Gastrocnemius medialis (tissue), 4 donors: ENCODE measurements at regions of chr9 and their contacts with region 1.

Region 1: GRCh38 chr9:135126535-135127187 is 39.2 kb downstream of the OLFM1 start:
- DNase-seq: peak; percentile 93 to 97
- ATAC-seq: peak; percentile 95 to 99
- H3K4me3 ChIP-seq: no peak overlapping the region
- H3K27ac ChIP-seq: peak overlapping the region; percentile 77 to 88 (median 82)
- H3K4me1 ChIP-seq: peaks cover 21 to 22% of the 10 kb centered on the region in 2 donors
- H3K27me3 ChIP-seq: no peaks in the 10 kb centered on the region
- CTCF ChIP-seq: peak in 1 of 5 experiments; percentile 13
- POLR2A ChIP-seq: peak in 1 of 2 donors; percentile 39

Region 2: DNA sequence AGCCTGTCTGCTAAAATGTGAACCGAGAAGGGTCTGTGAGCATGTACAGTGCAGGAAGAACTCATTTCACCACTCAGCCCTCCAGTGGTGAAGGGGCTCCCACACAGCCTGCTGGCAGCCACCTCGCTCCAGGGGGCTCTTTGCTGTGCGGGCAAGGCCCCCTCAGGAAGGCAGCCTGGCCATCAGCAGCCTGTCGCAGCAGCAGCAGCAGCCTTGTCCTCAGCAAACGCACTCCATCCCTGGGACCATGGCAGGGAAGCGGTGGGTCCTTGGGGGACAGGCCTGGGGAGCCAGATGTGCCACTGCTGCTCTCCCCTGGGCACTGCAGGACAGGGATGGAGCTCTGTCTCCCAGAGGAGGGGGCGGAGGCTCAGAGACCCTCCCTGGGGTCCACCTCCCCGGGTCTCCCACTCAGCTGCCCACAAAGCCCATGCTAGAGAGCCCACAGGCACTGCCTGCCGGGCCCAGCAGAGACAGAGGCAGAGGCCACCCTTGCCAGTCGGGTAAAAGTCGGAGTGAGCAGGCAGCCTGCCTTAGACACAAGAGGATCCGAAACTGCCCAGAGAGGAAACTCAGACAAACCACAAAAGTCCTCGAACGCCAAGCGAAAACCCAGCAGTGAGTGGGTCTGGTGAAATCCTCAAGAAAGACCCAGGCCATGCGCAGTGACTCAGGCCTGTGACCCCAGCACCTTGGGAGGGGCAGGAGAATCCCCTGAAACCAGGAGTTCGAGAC is 1066.8 kb before region 1 on chr9:
- in situ Hi-C with region 1: no loop called
- intact Hi-C with region 1: loop called (anchors 5 kb)
- DNase-seq: peak in 1 of 2 donors; percentile 28
- ATAC-seq: no peak
- H3K4me3 ChIP-seq: no peak overlapping the region
- H3K27ac ChIP-seq: no peak overlapping the region
- H3K4me1 ChIP-seq: peaks cover 93 to 100% of the 10 kb centered on the region in 2 donors
- H3K27me3 ChIP-seq: no peaks in the 10 kb centered on the region
- CTCF ChIP-seq: no peak
- POLR2A ChIP-seq: no peak

Region 3: GRCh38 chr9:135103001-135103446 is 23.6 kb before region 1 on chr9:
- in situ Hi-C with region 1: no loop called
- intact Hi-C with region 1: loop called (anchors 1 kb)
- DNase-seq: peak; percentile 81 to 93
- ATAC-seq: peak; percentile 95 to 98
- H3K4me3 ChIP-seq: no peak overlapping the region
- H3K27ac ChIP-seq: peak overlapping the region; percentile 69 to 85 (median 78)
- H3K4me1 ChIP-seq: peaks cover 24 to 47% of the 10 kb centered on the region in 2 donors
- H3K27me3 ChIP-seq: no peaks in the 10 kb centered on the region
- CTCF ChIP-seq: no peak
- POLR2A ChIP-seq: peak in 1 of 2 donors; percentile 26

Region 4: GRCh38 chr9:135355521-135356011 is 228.9 kb after region 1 on chr9:
- in situ Hi-C with region 1: no loop called
- intact Hi-C with region 1: no loop called
- DNase-seq: no peak
- ATAC-seq: no peak
- H3K4me3 ChIP-seq: no peak overlapping the region
- H3K27ac ChIP-seq: no peak overlapping the region
- H3K4me1 ChIP-seq: no peaks in the 10 kb centered on the region
- H3K27me3 ChIP-seq: peaks cover 9 to 24% (median 12%) of the 10 kb centered on the region in 3 donors
- CTCF ChIP-seq: no peak
- POLR2A ChIP-seq: no peak